HCT116 (cell line): ENCODE measurements at regions of chrX and their contacts with region 1.

Region 1: GRCh38 chrX:106894392-106894909 is 8.7 kb downstream of the RIPPLY1 start:
- DNase-seq: peak; percentile 63
- ATAC-seq: peak; percentile 79
- H3K4me3 ChIP-seq: peak overlapping the region in 1 of 2 experiments; percentile 30; a peak in 1 of 4 replicates
- H3K27ac ChIP-seq: peak overlapping the region; percentile 79
- H3K4me1 ChIP-seq: peaks cover 19 to 47% of the 10 kb centered on the region in 2 experiments
- H3K27me3 ChIP-seq: no peaks in the 10 kb centered on the region
- CTCF ChIP-seq: peak; percentile 74 to 79 (median 75)
- POLR2A ChIP-seq: no peak
- RAD21 ChIP-seq: peak; percentile 84

Region 2: GRCh38 chrX:106716004-106716403 is 178.4 kb before region 1 on chrX:
- CTCF ChIA-PET with region 1: no interaction called
- POLR2A ChIA-PET with region 1: no interaction called
- RAD21 ChIA-PET with region 1: no interaction called
- intact Hi-C with region 1: no loop called
- DNase-seq: no peak
- ATAC-seq: no peak
- H3K4me3 ChIP-seq: no peak overlapping the region
- H3K27ac ChIP-seq: no peak overlapping the region
- H3K4me1 ChIP-seq: no peaks in the 10 kb centered on the region
- H3K27me3 ChIP-seq: no peaks in the 10 kb centered on the region
- CTCF ChIP-seq: no peak
- POLR2A ChIP-seq: no peak
- RAD21 ChIP-seq: no peak

Region 3: DNA sequence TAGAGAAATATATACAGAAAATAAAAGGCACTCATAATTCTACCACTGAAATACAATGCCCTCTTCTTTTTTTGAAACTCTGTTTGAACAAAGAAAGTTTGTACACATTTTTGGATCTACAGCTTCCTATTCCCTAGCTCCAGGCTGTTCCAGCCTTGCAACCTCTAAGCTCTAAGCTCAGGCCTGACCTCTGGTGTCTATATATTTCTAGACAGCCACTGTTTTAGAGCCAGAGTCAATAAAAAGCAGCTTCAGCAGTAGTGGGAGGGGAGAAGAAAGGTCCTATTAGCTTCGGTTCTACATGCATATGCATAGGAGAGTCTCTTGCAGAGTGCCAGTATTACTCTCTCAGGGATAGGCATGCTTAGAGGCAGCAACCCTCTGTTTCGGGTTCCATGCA is 65.5 kb after region 1 on chrX:
- CTCF ChIA-PET with region 1: interaction called, 28 read pairs
- POLR2A ChIA-PET with region 1: interaction called, 3 read pairs
- RAD21 ChIA-PET with region 1: interaction called, 4 to 9 read pairs
- intact Hi-C with region 1: loop called (anchors 1 kb)
- DNase-seq: no peak
- ATAC-seq: peak; percentile 64
- H3K4me3 ChIP-seq: no peak overlapping the region
- H3K27ac ChIP-seq: no peak overlapping the region
- H3K4me1 ChIP-seq: peaks cover 0 to 3% of the 10 kb centered on the region in 2 experiments; a peak in 2 of 4 replicates
- H3K27me3 ChIP-seq: no peaks in the 10 kb centered on the region
- CTCF ChIP-seq: peak; percentile 25 to 31 (median 26); a peak in 4 of 6 replicates
- POLR2A ChIP-seq: no peak
- RAD21 ChIP-seq: peak; percentile 46

Region 4: DNA sequence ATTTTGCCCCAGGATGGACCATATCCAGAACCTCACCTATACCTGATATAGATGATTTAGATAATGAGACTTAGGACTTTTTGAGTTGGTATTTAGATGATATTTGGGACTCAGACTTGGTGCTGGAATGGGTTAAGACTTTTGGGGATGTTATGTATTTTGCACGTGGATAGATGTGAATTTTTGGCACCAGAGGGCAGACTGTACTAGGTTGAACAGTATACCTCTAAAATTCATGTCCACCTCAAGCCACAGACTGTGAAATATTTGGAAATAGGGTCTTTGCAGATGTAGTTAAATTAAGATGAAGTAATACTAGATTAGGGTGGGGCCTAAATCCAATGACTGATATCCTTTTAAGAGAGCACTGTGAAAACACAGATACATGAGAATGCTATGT is 208.5 kb after region 1 on chrX:
- CTCF ChIA-PET with region 1: no interaction called
- POLR2A ChIA-PET with region 1: no interaction called
- RAD21 ChIA-PET with region 1: no interaction called
- intact Hi-C with region 1: loop called (anchors 10 kb)
- DNase-seq: no peak
- ATAC-seq: 0 out of 2 replicates have a peak, but pooled peaks have one; percentile 44
- H3K4me3 ChIP-seq: no peak overlapping the region
- H3K27ac ChIP-seq: no peak overlapping the region
- H3K4me1 ChIP-seq: no peaks in the 10 kb centered on the region
- H3K27me3 ChIP-seq: no peaks in the 10 kb centered on the region
- CTCF ChIP-seq: peak; percentile 5 to 34 (median 31); a peak in 3 of 6 replicates
- POLR2A ChIP-seq: no peak
- RAD21 ChIP-seq: peak; percentile 59

Region 5: GRCh38 chrX:107894038-107894437 is 999.6 kb after region 1 on chrX:
- CTCF ChIA-PET with region 1: no interaction called
- POLR2A ChIA-PET with region 1: no interaction called
- RAD21 ChIA-PET with region 1: no interaction called
- intact Hi-C with region 1: loop called (anchors 10 kb)
- DNase-seq: peak; percentile 51
- ATAC-seq: peak; percentile 83
- H3K4me3 ChIP-seq: no peak overlapping the region
- H3K27ac ChIP-seq: no peak overlapping the region
- H3K4me1 ChIP-seq: no peaks in the 10 kb centered on the region
- H3K27me3 ChIP-seq: no peaks in the 10 kb centered on the region
- CTCF ChIP-seq: peak; percentile 25 to 54 (median 50); a peak in 5 of 6 replicates
- POLR2A ChIP-seq: no peak
- RAD21 ChIP-seq: peak; percentile 74